ENCODE measurements at regions of chr10 and their contacts with region 1.

Region 1: GRCh38 chr10:4849555-4850242 is 23.7 kb downstream of the AKR1E2 start:
- DNase-seq: peak; percentile 93
- H3K4me3 Mint-ChIP-seq: no peak overlapping the region
- H3K27ac Mint-ChIP-seq: peak overlapping the region; percentile 31
- H3K4me1 Mint-ChIP-seq: peaks cover 12% of the 10 kb centered on the region
- H3K27me3 Mint-ChIP-seq: no peaks in the 10 kb centered on the region

Region 2: GRCh38 chr10:4639960-4640359 is 209.7 kb before region 1 on chr10:
- CTCF ChIA-PET with region 1: no interaction called
- DNase-seq: no peak
- H3K4me3 Mint-ChIP-seq: no peak overlapping the region
- H3K27ac Mint-ChIP-seq: no peak overlapping the region
- H3K4me1 Mint-ChIP-seq: no peaks in the 10 kb centered on the region
- H3K27me3 Mint-ChIP-seq: no peaks in the 10 kb centered on the region

Region 3: DNA sequence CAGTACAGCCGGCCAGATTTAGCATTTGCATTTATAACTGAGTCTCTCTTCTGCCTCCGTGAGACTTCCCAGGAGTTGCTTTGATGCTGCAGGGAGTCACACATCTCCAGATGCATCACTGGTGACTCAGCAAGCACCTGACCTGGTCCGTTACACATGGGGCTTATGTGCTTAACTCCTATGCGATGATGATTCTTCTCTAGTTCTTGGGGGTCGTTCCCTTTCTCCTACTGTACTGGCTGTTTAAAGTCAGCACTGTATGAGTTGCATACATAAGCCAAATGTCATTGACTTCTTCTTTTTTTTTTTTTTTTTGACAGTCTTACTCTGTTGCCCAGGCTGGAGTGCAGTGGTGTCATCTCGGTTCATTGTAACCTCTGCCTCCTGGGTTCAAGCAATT is 36.7 kb before region 1 on chr10:
- CTCF ChIA-PET with region 1: interaction called, 31 read pairs
- DNase-seq: no peak
- H3K4me3 Mint-ChIP-seq: no peak overlapping the region
- H3K27ac Mint-ChIP-seq: no peak overlapping the region
- H3K4me1 Mint-ChIP-seq: no peaks in the 10 kb centered on the region
- H3K27me3 Mint-ChIP-seq: peaks cover 11% of the 10 kb centered on the region

Region 4: DNA sequence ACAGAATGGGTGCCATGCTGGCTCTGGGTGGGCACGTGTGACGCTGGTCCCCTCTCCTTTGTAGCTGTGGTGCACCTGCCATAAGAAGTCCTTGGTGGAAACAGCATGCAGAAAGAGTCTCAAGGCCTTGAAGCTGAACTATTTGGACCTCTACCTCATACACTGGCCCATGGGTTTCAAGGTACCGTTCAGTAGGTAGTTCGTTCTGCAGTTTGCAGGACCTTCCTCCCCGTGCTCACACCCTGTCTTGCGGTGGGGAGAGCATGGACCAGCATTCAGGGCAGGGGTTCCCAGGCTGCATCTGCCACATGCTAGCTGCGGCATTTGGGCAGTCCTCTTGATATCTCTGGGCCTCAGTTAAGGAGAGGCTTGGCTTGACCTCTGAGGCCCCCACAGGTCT is 16.4 kb before region 1 on chr10:
- CTCF ChIA-PET with region 1: interaction called, 53 read pairs
- DNase-seq: no peak
- H3K4me3 Mint-ChIP-seq: no peak overlapping the region
- H3K27ac Mint-ChIP-seq: no peak overlapping the region
- H3K4me1 Mint-ChIP-seq: peaks cover 52% of the 10 kb centered on the region
- H3K27me3 Mint-ChIP-seq: peaks cover 5% of the 10 kb centered on the region

Region 5: DNA sequence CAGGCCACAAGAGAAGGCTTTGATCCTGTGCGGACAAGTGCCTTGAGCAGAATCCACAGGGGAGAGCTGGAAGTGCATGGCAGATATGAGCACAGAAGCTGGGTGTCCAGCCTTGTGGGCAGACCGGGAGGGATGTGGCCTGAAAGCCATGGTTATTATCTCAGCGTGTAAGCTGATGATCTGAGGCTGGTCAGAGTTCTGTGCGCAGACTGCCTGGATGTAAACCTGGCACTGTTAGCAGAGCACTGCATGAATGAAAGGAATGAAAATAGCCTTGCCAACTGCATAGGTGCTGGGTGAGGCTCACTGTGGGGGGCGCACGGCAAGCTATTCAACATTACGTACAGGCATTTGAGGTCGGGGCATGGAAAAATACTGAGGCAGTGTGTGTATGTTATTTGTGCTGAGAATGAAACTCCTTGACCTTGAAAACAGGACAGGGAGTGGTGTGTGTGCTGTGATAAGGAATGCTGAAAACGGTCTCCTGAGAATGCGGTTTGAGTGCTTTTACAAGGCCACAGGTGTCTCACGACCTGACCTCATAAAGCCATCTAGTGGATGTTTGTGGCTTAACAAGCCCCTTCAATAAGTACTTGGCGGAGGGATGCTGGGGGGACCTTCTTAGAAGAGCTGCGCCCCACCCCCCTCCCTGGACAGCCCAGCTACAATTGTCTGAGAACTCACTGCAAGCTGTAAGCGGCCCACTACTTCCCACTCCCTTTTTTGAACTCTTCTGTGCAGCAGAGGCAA is 132.2 kb after region 1 on chr10:
- CTCF ChIA-PET with region 1: interaction called, 28 read pairs
- DNase-seq: no peak
- H3K4me3 Mint-ChIP-seq: no peak overlapping the region
- H3K27ac Mint-ChIP-seq: no peak overlapping the region
- H3K4me1 Mint-ChIP-seq: no peaks in the 10 kb centered on the region
- H3K27me3 Mint-ChIP-seq: peaks cover 16% of the 10 kb centered on the region

Region 6: DNA sequence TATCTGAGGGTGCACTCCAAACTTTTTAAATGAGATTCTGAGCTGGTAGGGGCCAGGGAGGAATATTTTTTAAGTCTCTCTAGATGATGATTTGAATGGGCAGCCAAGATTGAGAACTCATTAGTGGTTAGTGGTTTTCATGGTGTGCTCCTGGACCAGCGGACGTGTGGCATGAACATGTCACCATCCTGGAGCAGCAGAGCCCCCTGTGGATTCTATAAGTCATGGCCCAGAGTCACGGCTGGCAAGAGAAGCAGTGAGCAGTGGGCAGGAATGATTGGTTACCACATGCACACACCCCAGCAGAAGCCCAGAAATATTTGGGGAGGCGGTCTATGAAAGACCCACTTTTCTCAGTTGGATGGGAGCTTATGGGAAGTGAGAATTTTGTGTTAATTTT is 493.9 kb after region 1 on chr10:
- CTCF ChIA-PET with region 1: interaction called, 10 read pairs
- DNase-seq: no peak
- H3K4me3 Mint-ChIP-seq: no peak overlapping the region
- H3K27ac Mint-ChIP-seq: no peak overlapping the region
- H3K4me1 Mint-ChIP-seq: peaks cover 5% of the 10 kb centered on the region
- H3K27me3 Mint-ChIP-seq: peaks cover 7% of the 10 kb centered on the region

Region 7: GRCh38 chr10:5434017-5434753 is 584.5 kb after region 1 on chr10:
- CTCF ChIA-PET with region 1: interaction called, 82 read pairs
- DNase-seq: no peak
- H3K4me3 Mint-ChIP-seq: no peak overlapping the region
- H3K27ac Mint-ChIP-seq: no peak overlapping the region
- H3K4me1 Mint-ChIP-seq: peaks cover 12% of the 10 kb centered on the region
- H3K27me3 Mint-ChIP-seq: no peaks in the 10 kb centered on the region